Activated CD4-positive, alpha-beta T cell treated with anti-CD3 and anti-CD28 coated beads for 36 hours (primary cell): ENCODE measurements at regions of chr22 and their contacts with region 1.

Region 1: DNA sequence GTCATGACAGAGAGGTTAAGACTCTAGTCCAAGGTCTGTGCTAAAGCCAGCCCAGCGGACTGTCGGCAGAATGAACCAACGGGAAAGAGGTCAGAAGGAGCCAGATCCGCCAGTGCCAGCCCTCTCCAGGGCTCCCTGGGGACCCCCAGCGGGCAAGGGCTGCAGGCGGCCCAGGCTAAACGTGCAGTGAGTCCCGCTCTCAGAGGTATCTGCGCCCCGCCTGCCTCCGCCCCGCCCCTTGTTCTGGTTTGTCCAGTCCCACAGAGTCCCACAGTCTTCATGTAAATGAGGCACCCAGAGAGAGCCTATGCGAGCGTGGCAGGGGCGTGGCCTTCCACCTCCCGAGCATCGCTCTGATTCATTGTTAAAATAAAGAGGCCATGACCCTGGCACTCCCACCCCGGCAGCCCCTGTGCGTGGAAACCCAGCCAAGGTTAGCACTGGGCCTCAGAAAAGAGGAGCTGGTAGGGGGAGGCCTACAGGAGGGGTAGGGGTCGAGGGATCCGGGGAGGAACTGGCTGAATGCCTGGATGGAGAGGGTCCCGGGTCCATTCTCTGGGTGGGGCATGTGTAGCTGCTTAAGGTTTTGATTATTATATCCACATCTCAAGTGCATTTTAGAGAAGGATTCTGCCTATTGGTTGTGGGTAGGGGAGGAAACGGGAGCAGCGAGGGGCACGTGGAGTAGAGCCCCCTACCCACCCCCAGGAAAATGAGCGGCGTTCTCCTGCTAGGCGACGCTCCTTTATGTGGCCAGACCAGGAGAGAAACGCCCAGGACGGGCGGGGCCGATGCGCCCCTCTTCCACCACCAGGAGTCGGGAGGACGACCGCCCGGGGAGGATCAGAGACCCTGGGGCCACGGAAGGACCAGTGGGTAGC is at the start of gene TRIOBP:
- DNase-seq: peak; percentile 98
- ATAC-seq: peak; percentile 99
- H3K4me3 Mint-ChIP-seq: peak within 1 kb of the TSS; percentile 71
- H3K27ac Mint-ChIP-seq: peak within 1 kb of the TSS; percentile 67
- H3K4me1 Mint-ChIP-seq: peaks cover 17% of the 10 kb centered on the region
- H3K27me3 Mint-ChIP-seq: no peaks in the 10 kb centered on the region
- total RNA-seq, gene TRIOBP: 23.3 to 26.1 TPM

Region 2: GRCh38 chr22:37623075-37624016 is 73.6 kb before region 1 on chr22:
- CTCF ChIA-PET with region 1: interaction called, 3 read pairs
- POLR2A ChIA-PET with region 1: interaction called, 9 read pairs
- intact Hi-C with region 1: loop called in 1 of 2 experiments (anchors 1 kb)
- DNase-seq: peak; percentile 88
- ATAC-seq: peak; percentile 83
- H3K4me3 Mint-ChIP-seq: no peak overlapping the region
- H3K27ac Mint-ChIP-seq: peak overlapping the region; percentile 89
- H3K4me1 Mint-ChIP-seq: peaks cover 43% of the 10 kb centered on the region
- H3K27me3 Mint-ChIP-seq: no peaks in the 10 kb centered on the region

Region 3: DNA sequence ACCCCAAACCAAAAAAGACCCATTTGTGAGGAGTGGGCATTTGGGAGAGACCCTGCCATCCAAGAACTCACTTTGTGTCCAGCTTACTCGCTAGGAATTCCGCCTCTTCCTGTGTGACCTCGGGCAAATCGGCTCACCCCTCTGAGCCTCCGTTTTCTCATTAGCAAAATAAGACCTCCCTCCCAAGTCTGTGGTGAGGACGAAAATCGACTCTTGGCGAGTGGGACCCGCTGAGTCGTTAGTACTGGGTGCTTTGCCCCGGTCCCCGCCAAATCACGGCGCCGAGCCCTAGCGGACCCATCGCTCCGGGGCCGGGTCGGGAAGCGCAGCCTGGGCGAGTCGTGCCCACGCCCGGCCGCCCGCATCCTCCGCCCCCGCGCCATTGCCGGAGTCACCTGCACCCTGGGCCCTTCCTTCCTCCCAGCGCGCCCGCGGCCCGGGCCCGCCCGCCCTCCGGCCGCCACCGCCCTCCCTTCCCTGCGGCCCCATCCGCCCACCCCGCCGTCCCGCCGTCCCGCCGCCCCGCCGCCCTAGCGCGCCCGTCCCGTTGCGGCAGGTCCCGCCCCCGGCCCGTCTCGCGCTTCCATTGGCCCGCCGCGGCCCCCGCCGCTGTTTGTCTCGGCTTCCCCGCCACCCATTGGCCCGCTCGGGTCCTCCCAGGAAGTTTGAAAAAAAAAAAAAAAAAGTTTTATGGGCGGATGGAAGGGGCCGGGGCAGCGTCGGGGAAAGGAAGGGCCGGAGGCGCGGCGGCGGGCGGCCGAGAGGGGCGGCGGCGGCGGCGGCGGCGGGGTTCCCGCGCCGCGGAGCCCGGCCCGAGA is 48.9 kb after region 1 on chr22:
- CTCF ChIA-PET with region 1: no interaction called
- POLR2A ChIA-PET with region 1: no interaction called
- intact Hi-C with region 1: loop called in 1 of 2 experiments (anchors 1 kb)
- DNase-seq: peak; percentile 95
- ATAC-seq: peak; percentile 91
- H3K4me3 Mint-ChIP-seq: peak overlapping the region; percentile 84
- H3K27ac Mint-ChIP-seq: peak overlapping the region; percentile 90
- H3K4me1 Mint-ChIP-seq: peaks cover 25% of the 10 kb centered on the region
- H3K27me3 Mint-ChIP-seq: no peaks in the 10 kb centered on the region